ENCODE measurements at regions of chr6 and their contacts with region 1.

Region 1: DNA sequence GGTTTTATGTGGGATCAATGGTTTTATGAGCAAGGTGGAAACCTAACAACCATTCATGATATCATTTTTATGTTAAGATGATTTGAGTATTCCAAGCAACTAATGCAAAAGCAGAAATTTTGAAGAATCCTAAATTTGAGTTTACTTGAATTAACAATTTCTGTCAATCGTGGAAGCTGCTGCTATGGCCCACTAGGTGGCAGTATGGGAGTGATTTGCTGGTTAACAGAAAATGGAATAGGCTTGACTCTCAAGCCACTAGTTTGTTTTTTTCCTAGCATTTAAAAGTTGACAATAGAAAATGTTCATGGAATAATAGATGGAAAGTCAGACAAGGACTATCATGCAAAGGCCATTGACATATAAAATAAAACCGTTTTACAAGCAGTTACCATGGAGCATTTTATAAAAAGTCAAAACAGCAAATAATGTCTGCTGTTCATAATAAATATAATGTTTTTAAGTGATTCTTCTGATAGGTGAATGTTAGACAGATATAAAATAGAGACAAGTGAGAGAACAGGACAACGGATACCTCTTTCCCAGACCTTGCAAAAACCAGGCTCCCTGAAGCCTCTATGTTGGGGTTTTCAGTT is 43.0 kb upstream of the TMEM200A start:
- DNase-seq: peak in 2 of 3 donors; percentile 19 to 62
- ATAC-seq: no peak
- H3K4me3 ChIP-seq: no peak overlapping the region
- H3K27ac ChIP-seq: no peak overlapping the region
- H3K4me1 ChIP-seq: no peaks in the 10 kb centered on the region
- H3K27me3 ChIP-seq: no peaks in the 10 kb centered on the region

Region 2: DNA sequence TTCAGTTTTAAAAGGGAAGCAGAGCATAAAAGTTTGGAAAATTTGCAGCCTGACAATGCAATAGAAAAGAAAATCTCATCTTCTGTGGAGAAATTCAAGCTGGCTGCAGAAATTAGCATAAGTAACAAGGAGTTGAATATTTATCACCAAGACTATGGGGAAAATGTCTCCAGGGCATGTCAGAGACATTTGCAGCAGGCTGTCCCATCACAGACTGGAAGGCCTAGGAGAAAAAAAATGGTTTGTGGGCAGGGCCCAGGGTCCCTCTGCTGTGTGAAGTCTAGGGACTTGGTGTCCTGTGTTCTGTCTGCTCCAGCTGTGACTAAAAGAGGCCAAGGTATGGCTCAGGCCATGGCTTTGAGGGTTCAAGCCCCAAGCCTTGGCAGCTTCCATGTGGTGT is 1447.9 kb before region 1 on chr6:
- intact Hi-C with region 1: no loop called
- DNase-seq: no peak
- ATAC-seq: no peak
- H3K4me3 ChIP-seq: no peak overlapping the region
- H3K27ac ChIP-seq: no peak overlapping the region
- H3K4me1 ChIP-seq: no peaks in the 10 kb centered on the region
- H3K27me3 ChIP-seq: no peaks in the 10 kb centered on the region

Region 3: GRCh38 chr6:130529569-130530149 is 206.9 kb after region 1 on chr6:
- intact Hi-C with region 1: no loop called
- DNase-seq: no peak
- ATAC-seq: no peak
- H3K4me3 ChIP-seq: no peak overlapping the region
- H3K27ac ChIP-seq: no peak overlapping the region
- H3K4me1 ChIP-seq: no peaks in the 10 kb centered on the region
- H3K27me3 ChIP-seq: no peaks in the 10 kb centered on the region

Region 4: GRCh38 chr6:130697995-130698535 is 375.3 kb after region 1 on chr6:
- intact Hi-C with region 1: loop called in 1 of 4 experiments (anchors 5 kb)
- DNase-seq: peak in 2 of 3 donors; percentile 23 to 49
- ATAC-seq: peak; percentile 61 to 78
- H3K4me3 ChIP-seq: no peak overlapping the region
- H3K27ac ChIP-seq: no peak overlapping the region
- H3K4me1 ChIP-seq: no peaks in the 10 kb centered on the region
- H3K27me3 ChIP-seq: no peaks in the 10 kb centered on the region

Region 5: GRCh38 chr6:130872250-130873095 is 549.7 kb after region 1 on chr6:
- intact Hi-C with region 1: loop called in 3 of 4 experiments (anchors 5 to 10 kb)
- DNase-seq: peak; percentile 71 to 90 (median 83)
- ATAC-seq: peak; percentile 14 to 44
- H3K4me3 ChIP-seq: no peak overlapping the region
- H3K27ac ChIP-seq: no peak overlapping the region
- H3K4me1 ChIP-seq: no peaks in the 10 kb centered on the region
- H3K27me3 ChIP-seq: no peaks in the 10 kb centered on the region

Measured in right cardiac atrium (tissue), 5 donors.